Heart left ventricle (tissue), 16 donors: ENCODE measurements at regions of chr18 and their contacts with region 1.

Region 1: GRCh38 chr18:22703883-22704585 is 229.1 kb upstream of the RBBP8 start:
- DNase-seq: peak in 1 of 5 donors; percentile 16
- ATAC-seq: peak; percentile 68 to 82 (median 72)
- H3K4me3 ChIP-seq: no peak overlapping the region
- H3K27ac ChIP-seq: no peak overlapping the region
- H3K4me1 ChIP-seq: peaks cover 0 to 12% (median 0%) of the 10 kb centered on the region in 12 donors
- H3K27me3 ChIP-seq: no peaks in the 10 kb centered on the region
- CTCF ChIP-seq: peak; percentile 72 to 95 (median 82)
- POLR2A ChIP-seq: no peak

Region 2: GRCh38 chr18:21897811-21898210 is 806.2 kb before region 1 on chr18:
- intact Hi-C with region 1: loop called in 2 of 10 experiments (anchors 5 to 10 kb)
- DNase-seq: peak in 3 of 5 donors; percentile 18 to 32 (median 22)
- ATAC-seq: peak; percentile 61 to 82 (median 80)
- H3K4me3 ChIP-seq: no peak overlapping the region
- H3K27ac ChIP-seq: no peak overlapping the region
- H3K4me1 ChIP-seq: peaks cover 0 to 7% (median 0%) of the 10 kb centered on the region in 12 donors
- H3K27me3 ChIP-seq: no peaks in the 10 kb centered on the region
- CTCF ChIP-seq: peak; percentile 59 to 79 (median 68)
- POLR2A ChIP-seq: no peak

Region 3: DNA sequence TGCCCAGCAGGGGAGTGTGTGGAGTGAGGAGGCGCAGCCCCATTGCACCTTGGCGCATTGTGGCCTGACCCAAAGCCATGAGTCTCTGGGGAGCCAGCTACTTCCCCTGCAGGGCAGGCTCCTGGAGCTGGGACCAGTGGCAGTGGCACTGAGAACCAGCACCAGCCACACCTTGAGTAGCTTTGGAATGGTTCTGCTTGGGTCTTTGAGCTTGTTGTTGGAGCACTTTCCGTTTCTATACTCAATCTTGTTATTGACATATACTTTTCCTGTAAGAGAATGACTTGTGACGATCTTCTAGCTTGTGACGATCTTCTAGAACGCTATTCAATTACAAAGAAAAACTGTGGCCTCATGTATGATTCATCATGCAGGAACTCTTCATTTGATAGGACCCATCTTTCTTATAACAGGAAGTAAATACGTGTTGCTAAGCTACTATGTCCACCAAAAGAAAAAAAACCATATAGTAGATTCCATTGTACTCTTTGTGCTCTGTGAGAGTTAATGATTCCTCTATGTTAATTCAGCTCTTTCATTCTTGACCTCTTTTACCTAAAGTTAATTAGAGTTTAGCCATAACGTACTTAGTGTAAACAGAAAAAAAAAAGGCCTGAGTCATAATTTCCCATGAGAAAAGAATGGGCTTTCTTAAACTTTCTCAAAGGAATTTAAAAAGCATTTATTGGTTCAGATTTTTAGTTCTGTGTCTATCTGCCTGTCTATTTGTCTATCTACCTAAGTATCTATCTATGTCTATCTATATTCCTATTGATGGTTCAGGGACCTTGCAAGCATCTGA is 421.5 kb before region 1 on chr18:
- intact Hi-C with region 1: loop called in 1 of 10 experiments (anchors 10 kb)
- DNase-seq: no peak
- ATAC-seq: peak in 2 of 4 donors; percentile 21 to 33
- H3K4me3 ChIP-seq: no peak overlapping the region
- H3K27ac ChIP-seq: peak overlapping the region in 1 of 12 donors; percentile 66
- H3K4me1 ChIP-seq: peaks cover 0 to 50% (median 15%) of the 10 kb centered on the region in 12 donors
- H3K27me3 ChIP-seq: no peaks in the 10 kb centered on the region
- CTCF ChIP-seq: no peak
- POLR2A ChIP-seq: no peak

Region 4: GRCh38 chr18:22591222-22591621 is 112.8 kb before region 1 on chr18:
- intact Hi-C with region 1: loop called in 1 of 10 experiments (anchors 10 kb)
- DNase-seq: no peak
- ATAC-seq: no peak
- H3K4me3 ChIP-seq: no peak overlapping the region
- H3K27ac ChIP-seq: no peak overlapping the region
- H3K4me1 ChIP-seq: no peaks in the 10 kb centered on the region
- H3K27me3 ChIP-seq: no peaks in the 10 kb centered on the region
- CTCF ChIP-seq: no peak
- POLR2A ChIP-seq: no peak

Region 5: GRCh38 chr18:22789600-22789999 is 85.6 kb after region 1 on chr18:
- intact Hi-C with region 1: loop called in 1 of 10 experiments (anchors 10 kb)
- DNase-seq: no peak
- ATAC-seq: no peak
- H3K4me3 ChIP-seq: no peak overlapping the region
- H3K27ac ChIP-seq: no peak overlapping the region
- H3K4me1 ChIP-seq: no peaks in the 10 kb centered on the region
- H3K27me3 ChIP-seq: no peaks in the 10 kb centered on the region
- CTCF ChIP-seq: no peak
- POLR2A ChIP-seq: no peak